ENCODE measurements at regions of chr19 and their contacts with region 1.

Region 1: GRCh38 chr19:2236314-2237050 is at the starts of genes PLEKHJ1 and SF3A2:
- DNase-seq: peak; percentile 95 to 98 (median 98)
- ATAC-seq: peak; percentile 83
- H3K4me3 ChIP-seq: peak within 1 kb of the TSS; percentile 97
- H3K27ac ChIP-seq: peak within 1 kb of the TSS; percentile 98
- H3K4me1 ChIP-seq: peaks cover 28 to 71% of the 10 kb centered on the region in 2 experiments
- H3K27me3 ChIP-seq: no peaks in the 10 kb centered on the region
- CTCF ChIP-seq: peak; percentile 96 to 99 (median 99)
- EP300 ChIP-seq: no peak; the same call in 1 of the 2 replicates
- POLR2A ChIP-seq: peak; percentile 90
- RAD21 ChIP-seq: peak; percentile 98 to 100
- polyA plus RNA-seq, gene PLEKHJ1: 1.5 to 6.8 TPM
- polyA plus RNA-seq, gene SF3A2: 0.17 to 0.35 TPM

Region 2: DNA sequence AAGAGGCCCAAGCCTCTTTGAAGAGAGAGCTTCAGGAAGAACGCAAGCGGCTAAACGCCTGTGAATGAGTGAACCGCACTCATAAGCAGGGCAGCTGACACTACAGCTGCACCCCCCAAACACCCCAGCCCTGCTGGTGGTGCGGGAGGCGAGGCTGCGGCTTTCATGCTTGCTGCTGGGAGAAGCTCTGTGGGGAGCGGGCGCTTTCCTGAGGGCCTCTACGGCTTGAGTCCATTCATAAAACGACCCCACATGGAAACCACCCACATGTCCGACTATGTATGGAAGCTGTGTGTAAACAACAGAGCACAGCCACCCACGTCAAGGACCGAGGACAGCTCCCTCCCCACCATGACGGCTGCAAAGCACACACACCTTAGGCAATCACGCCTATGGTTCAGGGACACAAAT is 90.6 kb before region 1 on chr19:
- CTCF ChIA-PET with region 1: no interaction called
- POLR2A ChIA-PET with region 1: no interaction called
- in situ Hi-C with region 1: no loop called
- intact Hi-C with region 1: no loop called
- DNase-seq: no peak
- ATAC-seq: no peak
- H3K4me3 ChIP-seq: no peak overlapping the region
- H3K27ac ChIP-seq: no peak overlapping the region
- H3K4me1 ChIP-seq: peaks cover 21 to 37% of the 10 kb centered on the region in 2 experiments; a peak in 4 of 5 replicates
- H3K27me3 ChIP-seq: no peaks in the 10 kb centered on the region
- CTCF ChIP-seq: no peak
- EP300 ChIP-seq: no peak
- POLR2A ChIP-seq: no peak
- RAD21 ChIP-seq: no peak

Region 3: DNA sequence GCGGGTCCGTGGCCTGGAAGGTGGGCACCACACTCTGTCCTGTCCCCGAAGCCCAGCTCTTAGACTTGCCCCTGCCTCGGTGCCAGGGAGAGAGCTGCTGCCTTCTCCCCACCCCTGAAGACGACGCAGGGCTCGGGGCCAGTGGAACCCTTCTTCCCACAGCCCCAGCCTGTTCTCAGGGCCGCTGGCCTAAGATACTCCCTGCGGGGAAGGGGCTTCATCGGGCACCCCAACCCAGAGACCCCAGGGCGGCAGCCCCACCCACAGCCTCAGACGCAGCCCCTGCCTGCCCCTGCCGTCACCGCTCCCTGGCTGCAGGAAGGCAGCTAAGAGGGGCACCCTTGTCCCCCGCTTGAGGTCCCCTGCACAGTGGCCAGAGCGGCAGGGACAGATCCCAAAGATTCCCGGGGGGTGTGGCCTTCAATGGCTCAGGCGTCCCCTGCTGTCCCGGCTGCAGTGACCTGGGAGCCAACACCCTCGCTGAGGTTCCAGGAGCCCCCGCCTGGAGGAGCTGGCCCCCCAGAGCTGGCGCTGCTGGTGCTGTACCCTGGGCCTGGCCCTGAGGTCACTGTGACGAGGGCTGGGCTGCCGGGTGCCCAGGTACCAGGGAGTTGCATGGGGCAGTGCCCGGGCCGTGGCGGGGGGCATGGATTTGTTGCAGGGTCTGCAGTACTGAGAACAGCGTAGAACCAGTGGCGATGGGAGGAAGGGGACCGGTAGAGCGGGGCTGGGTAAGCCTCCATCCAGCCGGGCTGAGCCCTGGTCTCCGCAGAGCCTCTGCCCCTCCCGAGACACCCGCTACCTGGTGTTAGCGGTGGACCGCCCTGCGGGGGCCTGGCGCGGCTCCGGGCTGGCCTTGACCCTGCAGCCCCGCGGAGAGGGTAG is 13.6 kb after region 1 on chr19:
- CTCF ChIA-PET with region 1: no interaction called
- POLR2A ChIA-PET with region 1: interaction called, 22 read pairs
- in situ Hi-C with region 1: no loop called
- intact Hi-C with region 1: no loop called
- DNase-seq: no peak
- ATAC-seq: peak; percentile 22
- H3K4me3 ChIP-seq: no peak overlapping the region
- H3K27ac ChIP-seq: no peak overlapping the region
- H3K4me1 ChIP-seq: peaks cover 0 to 70% of the 10 kb centered on the region in 2 experiments; a peak in 2 of 5 replicates
- H3K27me3 ChIP-seq: no peaks in the 10 kb centered on the region
- CTCF ChIP-seq: no peak
- EP300 ChIP-seq: no peak
- POLR2A ChIP-seq: peak; percentile 53
- RAD21 ChIP-seq: no peak

Region 4: DNA sequence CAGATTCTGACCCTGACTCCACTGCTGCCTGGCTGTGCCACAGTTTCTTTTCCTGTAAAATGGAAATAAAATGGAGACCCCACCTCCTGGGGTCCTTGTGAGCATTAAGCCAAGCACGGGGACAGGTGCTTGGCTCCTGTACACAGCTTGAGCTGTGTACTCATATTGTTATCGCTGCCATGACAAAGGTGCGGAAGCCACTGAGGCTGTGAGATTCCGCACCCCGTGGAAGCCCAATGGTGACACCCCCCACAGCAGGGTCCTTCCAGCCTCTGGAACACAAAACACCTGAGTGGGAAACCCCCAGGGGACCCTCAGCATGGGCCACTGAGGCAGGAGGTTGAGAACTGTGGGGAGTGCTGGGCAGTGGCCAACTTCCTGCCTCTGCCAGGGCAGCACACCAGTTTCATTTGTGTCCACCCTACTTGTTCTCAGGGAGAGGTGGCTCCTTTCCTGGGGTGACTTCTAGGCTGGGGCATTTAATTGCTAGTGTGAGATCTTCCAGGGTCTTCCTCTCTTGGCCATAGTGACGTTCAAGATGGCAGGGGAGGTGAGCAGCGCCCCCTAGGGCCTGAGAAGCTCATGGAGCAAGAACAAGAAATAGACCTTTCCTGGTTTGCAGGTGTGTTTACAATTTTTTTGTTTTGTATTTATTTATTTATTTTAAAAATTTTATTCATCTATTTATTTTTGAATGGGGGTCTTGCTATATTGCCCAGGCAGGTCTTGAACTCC is 25.1 kb after region 1 on chr19:
- CTCF ChIA-PET with region 1: no interaction called
- POLR2A ChIA-PET with region 1: interaction called, 52 read pairs
- in situ Hi-C with region 1: no loop called
- intact Hi-C with region 1: loop called (anchors 2 kb)
- DNase-seq: peak in 3 of 4 experiments; percentile 44 to 79 (median 63)
- ATAC-seq: peak; percentile 28; the same call in 2 of the 3 replicates
- H3K4me3 ChIP-seq: no peak overlapping the region
- H3K27ac ChIP-seq: no peak overlapping the region; the same call in 2 of the 3 replicates
- H3K4me1 ChIP-seq: peaks cover 21 to 51% of the 10 kb centered on the region in 2 experiments
- H3K27me3 ChIP-seq: no peaks in the 10 kb centered on the region
- CTCF ChIP-seq: peak; percentile 64 to 79 (median 74)
- EP300 ChIP-seq: no peak
- POLR2A ChIP-seq: no peak
- RAD21 ChIP-seq: peak; percentile 18 to 42; a peak in 2 of 4 replicates

Region 5: DNA sequence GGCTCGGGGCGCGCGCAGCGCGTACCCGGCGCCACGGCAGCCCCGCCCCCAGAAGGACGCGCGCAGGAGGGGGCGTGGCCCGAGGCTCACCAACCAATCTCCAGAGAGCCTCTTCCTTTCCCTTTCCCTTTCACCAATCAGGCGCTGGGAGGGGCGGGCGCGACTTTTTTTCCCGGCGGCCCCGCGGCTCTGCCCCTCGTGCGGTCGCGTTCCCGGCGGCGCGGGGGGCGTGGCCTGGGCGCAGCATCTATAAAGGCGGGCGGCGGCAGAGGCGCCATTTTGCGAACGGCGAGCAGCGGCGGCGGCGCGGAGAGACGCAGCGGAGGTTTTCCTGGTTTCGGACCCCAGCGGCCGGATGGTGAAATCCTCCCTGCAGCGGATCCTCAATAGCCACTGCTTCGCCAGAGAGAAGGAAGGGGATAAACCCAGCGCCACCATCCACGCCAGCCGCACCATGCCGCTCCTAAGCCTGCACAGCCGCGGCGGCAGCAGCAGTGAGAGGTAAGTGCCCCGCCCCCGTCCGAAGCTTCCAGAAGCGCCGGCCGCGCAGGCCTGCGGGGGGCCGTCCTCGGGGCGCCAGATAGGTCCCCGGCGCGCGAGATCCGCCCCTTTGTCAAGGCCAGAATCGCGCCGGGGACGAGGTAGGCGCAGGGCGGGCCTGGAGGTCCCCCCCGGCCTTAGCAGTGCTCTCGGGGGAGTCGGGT is 32.9 kb after region 1 on chr19:
- CTCF ChIA-PET with region 1: interaction called, 6 read pairs
- POLR2A ChIA-PET with region 1: interaction called, 86 read pairs
- in situ Hi-C with region 1: loop called (anchors 5 kb)
- intact Hi-C with region 1: loop called (anchors 1 kb)
- DNase-seq: peak; percentile 94 to 100 (median 96)
- ATAC-seq: peak; percentile 71
- H3K4me3 ChIP-seq: peak overlapping the region; percentile 91
- H3K27ac ChIP-seq: peak overlapping the region; percentile 94
- H3K4me1 ChIP-seq: peaks cover 25 to 76% of the 10 kb centered on the region in 2 experiments
- H3K27me3 ChIP-seq: no peaks in the 10 kb centered on the region
- CTCF ChIP-seq: peak in 1 of 3 experiments; percentile 21; a peak in 2 of 6 replicates
- EP300 ChIP-seq: no peak; the same call in 1 of the 2 replicates
- POLR2A ChIP-seq: peak; percentile 100
- RAD21 ChIP-seq: peak in 1 of 2 experiments; percentile 15; a peak in 1 of 4 replicates

Region 6: DNA sequence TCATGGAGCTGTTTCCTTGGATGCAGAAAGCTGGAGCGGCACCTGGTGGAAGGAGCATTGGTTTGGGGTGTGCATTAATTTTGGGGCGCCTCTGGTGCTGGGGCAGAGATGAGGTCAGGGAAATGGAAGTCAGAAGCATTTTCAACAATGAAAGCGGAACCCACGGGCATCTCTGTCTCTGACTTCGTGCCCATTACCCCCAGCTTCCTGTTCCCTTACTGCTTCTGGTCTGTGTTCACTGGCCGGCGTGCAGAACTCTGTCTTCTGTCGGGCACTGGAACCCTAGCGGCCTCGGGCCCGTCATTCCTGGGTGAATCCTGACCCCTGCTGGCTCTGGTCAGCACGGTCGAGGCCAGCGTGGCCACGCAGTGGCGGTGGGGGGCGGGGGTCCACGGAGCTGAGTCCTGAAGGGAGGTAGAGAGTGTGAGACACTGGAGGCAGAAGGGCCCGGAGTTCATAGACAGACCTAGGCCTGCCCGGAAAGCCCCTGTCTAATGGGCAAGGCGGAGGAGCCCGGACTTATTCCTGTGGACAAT is 79.4 kb after region 1 on chr19:
- CTCF ChIA-PET with region 1: no interaction called
- POLR2A ChIA-PET with region 1: no interaction called
- in situ Hi-C with region 1: loop called (anchors 10 kb)
- intact Hi-C with region 1: loop called (anchors 1 kb)
- DNase-seq: peak in 3 of 4 experiments; percentile 43 to 69 (median 66)
- ATAC-seq: peak; percentile 89
- H3K4me3 ChIP-seq: no peak overlapping the region
- H3K27ac ChIP-seq: no peak overlapping the region
- H3K4me1 ChIP-seq: peaks cover 3 to 33% of the 10 kb centered on the region in 2 experiments; a peak in 3 of 5 replicates
- H3K27me3 ChIP-seq: no peaks in the 10 kb centered on the region
- CTCF ChIP-seq: peak; percentile 57 to 79 (median 76)
- EP300 ChIP-seq: no peak
- POLR2A ChIP-seq: no peak
- RAD21 ChIP-seq: peak; percentile 64 to 87

Region 7: GRCh38 chr19:2391118-2391725 is 154.7 kb after region 1 on chr19:
- CTCF ChIA-PET with region 1: interaction called, 3 read pairs
- POLR2A ChIA-PET with region 1: no interaction called
- in situ Hi-C with region 1: loop called (anchors 5 kb)
- intact Hi-C with region 1: loop called (anchors 1 kb)
- DNase-seq: peak; percentile 55 to 71 (median 61)
- ATAC-seq: peak; percentile 59
- H3K4me3 ChIP-seq: no peak overlapping the region
- H3K27ac ChIP-seq: no peak overlapping the region; the same call in 2 of the 3 replicates
- H3K4me1 ChIP-seq: peaks cover 6 to 19% of the 10 kb centered on the region in 2 experiments; a peak in 4 of 5 replicates
- H3K27me3 ChIP-seq: no peaks in the 10 kb centered on the region
- CTCF ChIP-seq: peak; percentile 69 to 89 (median 78)
- EP300 ChIP-seq: 0 out of 2 replicates have a peak, but pooled peaks have one; percentile 11
- POLR2A ChIP-seq: no peak
- RAD21 ChIP-seq: peak; percentile 78 to 85

Region 8: DNA sequence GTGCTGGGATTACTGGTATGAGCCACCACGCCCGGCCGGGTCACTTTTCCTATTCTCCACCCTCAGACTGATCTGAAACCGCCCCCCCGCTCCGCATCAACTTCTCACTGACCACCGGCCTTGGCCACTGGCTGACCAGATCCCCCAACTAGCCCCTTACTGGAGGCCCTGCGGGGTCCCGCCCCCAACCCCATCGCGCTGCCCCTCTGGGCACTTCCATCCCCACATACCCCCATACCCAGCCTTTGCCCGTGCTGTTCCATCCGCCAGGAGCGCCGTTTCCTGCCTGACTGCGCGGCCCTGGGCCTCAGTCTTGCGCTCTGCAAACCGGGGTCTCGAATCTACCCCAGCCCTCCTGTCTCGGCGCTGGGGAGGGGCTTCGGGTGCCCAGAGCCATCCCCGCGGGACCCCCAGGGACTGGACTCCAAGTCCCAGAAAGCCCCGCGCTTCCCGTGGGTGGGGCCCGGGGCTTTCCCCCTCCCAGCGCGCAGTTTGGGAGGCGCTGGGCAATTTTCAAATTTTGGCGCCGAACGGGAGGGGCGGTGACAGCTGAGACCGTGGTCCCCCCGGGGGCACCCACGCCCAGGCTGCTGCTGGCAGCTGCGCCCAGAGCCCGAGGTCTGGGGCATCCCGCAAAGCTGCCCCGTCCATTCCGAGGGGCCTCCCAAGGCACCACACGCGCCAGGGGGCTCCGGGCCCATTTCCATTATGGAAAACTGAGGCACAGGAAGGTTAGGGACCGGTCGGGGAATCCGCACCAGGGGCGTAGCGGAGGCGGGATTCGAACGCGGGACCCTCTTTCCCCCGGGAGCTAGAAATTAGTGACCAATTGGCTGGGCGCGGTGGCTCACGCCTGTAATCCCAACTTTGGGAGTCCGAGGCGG is 225.5 kb after region 1 on chr19:
- CTCF ChIA-PET with region 1: no interaction called
- POLR2A ChIA-PET with region 1: no interaction called
- in situ Hi-C with region 1: no loop called
- intact Hi-C with region 1: no loop called
- DNase-seq: peak in 3 of 4 experiments; percentile 24 to 48 (median 41)
- ATAC-seq: peak; percentile 74
- H3K4me3 ChIP-seq: peak overlapping the region; percentile 28
- H3K27ac ChIP-seq: no peak overlapping the region
- H3K4me1 ChIP-seq: peaks cover 0 to 24% of the 10 kb centered on the region in 2 experiments; a peak in 2 of 5 replicates
- H3K27me3 ChIP-seq: no peaks in the 10 kb centered on the region
- CTCF ChIP-seq: no peak
- EP300 ChIP-seq: no peak
- POLR2A ChIP-seq: no peak
- RAD21 ChIP-seq: no peak

Measured in K562 (cell line).